ENCODE measurements at regions of chr2 and their contacts with region 1.

Region 1: GRCh38 chr2:122072666-122073065 is 317.2 kb downstream of the TSN start:
- DNase-seq: peak; percentile 37 to 54
- H3K4me3 ChIP-seq: no peak overlapping the region
- H3K4me3 Mint-ChIP-seq: no peak overlapping the region
- H3K27ac Mint-ChIP-seq: peak overlapping the region; percentile 26
- H3K4me1 ChIP-seq: peaks cover 13% of the 10 kb centered on the region
- H3K4me1 Mint-ChIP-seq: peaks cover 6% of the 10 kb centered on the region
- H3K27me3 ChIP-seq: no peaks in the 10 kb centered on the region
- H3K27me3 Mint-ChIP-seq: no peaks in the 10 kb centered on the region
- CTCF ChIP-seq: no peak

Region 2: DNA sequence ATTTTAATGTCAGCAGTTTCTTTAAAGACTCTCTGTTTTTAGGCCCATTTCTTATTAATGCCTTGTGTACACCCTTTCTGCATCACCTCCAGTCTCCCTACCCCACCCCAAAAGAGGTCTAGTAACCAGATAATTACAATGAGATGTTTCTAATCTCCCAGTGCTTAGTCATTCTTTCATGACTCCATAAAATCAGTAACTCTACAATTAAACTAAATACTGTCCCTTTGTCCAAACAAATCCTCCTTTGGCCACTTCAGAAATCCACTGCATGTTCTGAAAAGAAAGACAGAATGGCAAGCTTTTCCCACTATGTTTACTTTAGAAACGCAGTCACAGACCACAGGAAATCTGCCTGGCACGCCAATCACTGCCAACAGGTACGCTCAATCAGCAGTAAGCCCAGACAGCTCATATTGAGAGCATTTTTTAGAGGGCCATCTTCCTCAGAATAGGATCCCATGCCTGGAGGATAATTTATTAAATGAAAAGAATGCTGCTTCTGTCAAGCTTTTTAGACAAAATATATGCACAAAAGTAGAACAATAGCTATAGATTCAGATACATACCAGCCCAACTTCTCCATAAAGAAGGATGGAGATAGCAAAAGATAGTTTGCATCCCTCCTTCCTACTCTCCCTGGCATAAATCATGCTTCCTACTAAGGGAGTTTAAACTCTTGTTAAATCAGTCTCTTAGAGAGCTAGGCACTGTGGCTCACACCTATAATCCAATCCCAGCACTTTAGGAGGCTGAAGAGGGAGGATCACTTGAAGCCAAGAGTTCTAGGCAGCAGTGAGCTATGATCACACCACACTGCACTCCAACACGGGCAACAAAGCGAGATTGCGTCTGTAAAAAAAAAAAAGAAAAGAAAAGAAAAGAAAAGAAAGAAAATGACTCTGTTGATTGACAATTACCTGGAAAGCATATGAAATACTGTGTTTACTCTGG is 438.0 kb before region 1 on chr2:
- CTCF ChIA-PET with region 1: no interaction called
- POLR2A ChIA-PET with region 1: no interaction called
- intact Hi-C with region 1: no loop called
- DNase-seq: no peak
- H3K4me3 ChIP-seq: no peak overlapping the region
- H3K4me3 Mint-ChIP-seq: no peak overlapping the region
- H3K27ac Mint-ChIP-seq: peak overlapping the region; percentile 33
- H3K4me1 ChIP-seq: no peaks in the 10 kb centered on the region
- H3K4me1 Mint-ChIP-seq: peaks cover 12% of the 10 kb centered on the region
- H3K27me3 ChIP-seq: no peaks in the 10 kb centered on the region
- H3K27me3 Mint-ChIP-seq: no peaks in the 10 kb centered on the region
- CTCF ChIP-seq: no peak

Region 3: DNA sequence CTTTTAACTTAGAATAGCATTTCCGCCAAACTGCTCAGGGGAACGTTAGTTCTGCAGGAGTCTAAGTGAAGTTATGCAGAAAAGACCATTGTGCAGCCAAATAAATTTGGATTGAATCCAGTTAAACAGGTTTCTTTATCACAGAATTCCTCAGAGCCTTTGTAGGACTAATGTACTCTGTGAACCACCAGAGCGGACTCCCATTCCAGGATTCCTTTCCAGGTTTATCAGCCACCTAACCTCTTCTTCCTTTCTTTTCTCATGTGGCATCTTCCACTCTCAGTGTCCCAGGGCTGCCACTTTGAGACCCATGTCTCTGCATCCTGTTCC is 33.2 kb after region 1 on chr2:
- CTCF ChIA-PET with region 1: no interaction called
- POLR2A ChIA-PET with region 1: no interaction called
- intact Hi-C with region 1: loop called (anchors 1 kb)
- DNase-seq: peak; percentile 63 to 68
- H3K4me3 ChIP-seq: no peak overlapping the region
- H3K4me3 Mint-ChIP-seq: peak overlapping the region; percentile 66
- H3K27ac Mint-ChIP-seq: peak overlapping the region; percentile 65
- H3K4me1 ChIP-seq: peaks cover 30% of the 10 kb centered on the region
- H3K4me1 Mint-ChIP-seq: peaks cover 50% of the 10 kb centered on the region
- H3K27me3 ChIP-seq: no peaks in the 10 kb centered on the region
- H3K27me3 Mint-ChIP-seq: no peaks in the 10 kb centered on the region
- CTCF ChIP-seq: no peak